A549 (cell line): ENCODE measurements at regions of chr20 and their contacts with region 1.

Region 1: DNA sequence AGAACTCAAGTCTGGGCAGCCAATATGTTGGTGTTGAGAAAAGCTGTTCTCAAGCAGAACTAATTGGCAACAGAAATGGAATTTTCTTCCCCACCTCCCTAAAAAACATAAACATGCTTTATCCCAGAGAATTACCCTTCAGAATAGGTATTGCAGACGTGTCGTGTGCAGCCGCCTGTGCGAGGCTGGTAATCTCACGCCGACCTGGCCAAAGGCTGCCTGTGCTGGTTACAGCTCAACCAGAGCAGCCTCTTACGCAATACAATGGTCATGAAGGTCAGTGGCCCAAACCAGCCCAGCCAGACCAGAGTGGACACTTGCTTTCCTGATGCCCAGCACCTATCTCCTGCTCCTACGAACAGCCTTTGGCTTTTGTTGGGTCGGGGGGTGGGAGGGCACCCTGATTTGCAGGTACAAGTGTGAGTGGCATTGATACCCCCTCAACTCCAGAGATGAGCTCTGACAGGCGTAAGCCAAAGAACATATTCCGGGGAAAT is 10.9 kb downstream of the RIPOR3 start:
- DNase-seq: no peak
- ATAC-seq: peak; percentile 45 to 69; a peak in 4 of 6 replicates
- H3K4me3 ChIP-seq: no peak overlapping the region
- H3K27ac ChIP-seq: peak overlapping the region; percentile 53 to 73
- H3K4me1 ChIP-seq: peaks cover 36% of the 10 kb centered on the region
- CTCF ChIP-seq: no peak
- EP300 ChIP-seq: no peak
- POLR2A ChIP-seq: no peak
- RAD21 ChIP-seq: no peak

Region 2: GRCh38 chr20:50713657-50714101 is 33.2 kb after region 1 on chr20:
- CTCF ChIA-PET with region 1: interaction called, 12 read pairs
- POLR2A ChIA-PET with region 1: no interaction called
- DNase-seq: peak in 1 of 2 experiments; percentile 56
- ATAC-seq: peak; percentile 54 to 77; a peak in 3 of 6 replicates
- H3K4me3 ChIP-seq: no peak overlapping the region
- H3K27ac ChIP-seq: peak overlapping the region in 1 of 2 experiments; percentile 44; a peak in 2 of 6 replicates
- H3K4me1 ChIP-seq: peaks cover 14% of the 10 kb centered on the region; the same call in 1 of the 3 replicates
- CTCF ChIP-seq: peak; percentile 40
- EP300 ChIP-seq: no peak
- POLR2A ChIP-seq: no peak
- RAD21 ChIP-seq: peak; percentile 56 to 62

Region 3: GRCh38 chr20:50824193-50824632 is 143.8 kb after region 1 on chr20:
- CTCF ChIA-PET with region 1: no interaction called
- POLR2A ChIA-PET with region 1: no interaction called
- DNase-seq: peak in 1 of 2 experiments; percentile 30
- ATAC-seq: no peak; a peak in 1 of 6 replicates
- H3K4me3 ChIP-seq: no peak overlapping the region
- H3K27ac ChIP-seq: no peak overlapping the region
- H3K4me1 ChIP-seq: 0 out of 3 replicates have a peak, but pooled peaks cover 2% of the 10 kb centered on the region
- CTCF ChIP-seq: no peak
- EP300 ChIP-seq: no peak
- POLR2A ChIP-seq: no peak
- RAD21 ChIP-seq: no peak